CD8-positive, alpha-beta T cell (primary cell): ENCODE measurements at regions of chr10 and their contacts with region 1.

Region 1: GRCh38 chr10:33008499-33009243 is 50.6 kb upstream of the ITGB1 start:
- DNase-seq: peak in 8 of 9 experiments; percentile 44 to 82 (median 65)
- ATAC-seq: peak; percentile 59
- H3K4me3 ChIP-seq: peak overlapping the region; percentile 34 to 36
- H3K4me3 Mint-ChIP-seq: peak overlapping the region; percentile 68
- H3K27ac ChIP-seq: peak overlapping the region in 1 of 2 experiments; percentile 47
- H3K27ac Mint-ChIP-seq: peak overlapping the region; percentile 49
- H3K4me1 ChIP-seq: peaks cover 9% of the 10 kb centered on the region
- H3K4me1 Mint-ChIP-seq: peaks cover 35% of the 10 kb centered on the region
- H3K27me3 ChIP-seq: no peaks in the 10 kb centered on the region
- H3K27me3 Mint-ChIP-seq: peaks cover 12% of the 10 kb centered on the region
- CTCF ChIP-seq: peak; percentile 100

Region 2: GRCh38 chr10:32190890-32191491 is 817.7 kb before region 1 on chr10:
- CTCF ChIA-PET with region 1: interaction called, 12 read pairs
- POLR2A ChIA-PET with region 1: no interaction called
- intact Hi-C with region 1: loop called (anchors 1 to 2 kb)
- DNase-seq: peak in 2 of 9 experiments; percentile 52 to 65
- ATAC-seq: peak; percentile 51
- H3K4me3 ChIP-seq: no peak overlapping the region
- H3K4me3 Mint-ChIP-seq: no peak overlapping the region
- H3K27ac ChIP-seq: no peak overlapping the region
- H3K27ac Mint-ChIP-seq: no peak overlapping the region
- H3K4me1 ChIP-seq: no peaks in the 10 kb centered on the region
- H3K4me1 Mint-ChIP-seq: peaks cover 2% of the 10 kb centered on the region
- H3K27me3 ChIP-seq: no peaks in the 10 kb centered on the region
- H3K27me3 Mint-ChIP-seq: no peaks in the 10 kb centered on the region
- CTCF ChIP-seq: peak; percentile 92

Region 3: GRCh38 chr10:32367793-32368453 is 640.7 kb before region 1 on chr10:
- CTCF ChIA-PET with region 1: interaction called, 3 read pairs
- POLR2A ChIA-PET with region 1: no interaction called
- intact Hi-C with region 1: loop called (anchors 5 kb)
- DNase-seq: peak; percentile 49 to 87 (median 78)
- ATAC-seq: peak; percentile 73
- H3K4me3 ChIP-seq: no peak overlapping the region
- H3K4me3 Mint-ChIP-seq: peak overlapping the region; percentile 23
- H3K27ac ChIP-seq: no peak overlapping the region
- H3K27ac Mint-ChIP-seq: peak overlapping the region; percentile 78
- H3K4me1 ChIP-seq: peaks cover 38% of the 10 kb centered on the region
- H3K4me1 Mint-ChIP-seq: peaks cover 65% of the 10 kb centered on the region
- H3K27me3 ChIP-seq: no peaks in the 10 kb centered on the region
- H3K27me3 Mint-ChIP-seq: no peaks in the 10 kb centered on the region
- CTCF ChIP-seq: peak; percentile 86

Region 4: DNA sequence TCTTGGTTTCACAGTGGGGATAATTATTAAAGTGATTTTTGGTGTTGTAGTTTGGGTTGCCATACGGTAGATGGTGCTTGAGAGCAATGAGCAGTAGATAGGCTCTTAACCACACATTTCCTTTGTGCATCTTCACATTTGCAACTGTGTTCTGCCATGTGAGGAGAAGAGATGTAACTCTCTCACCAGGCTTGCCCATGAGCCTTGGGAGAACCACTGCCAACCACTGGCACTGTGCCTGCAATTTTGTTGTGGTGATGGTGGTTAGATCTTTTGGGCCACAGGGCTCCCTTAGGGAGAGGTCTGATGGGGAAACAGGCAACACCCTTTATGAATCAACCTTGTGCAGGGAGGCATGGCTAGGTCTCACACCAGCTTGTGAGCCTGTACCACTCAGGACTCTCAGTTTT is 358.4 kb before region 1 on chr10:
- CTCF ChIA-PET with region 1: interaction called, 4 read pairs
- POLR2A ChIA-PET with region 1: no interaction called
- intact Hi-C with region 1: loop called (anchors 10 kb)
- DNase-seq: peak in 2 of 9 experiments; percentile 35 to 50
- ATAC-seq: peak; percentile 38
- H3K4me3 ChIP-seq: no peak overlapping the region
- H3K4me3 Mint-ChIP-seq: no peak overlapping the region
- H3K27ac ChIP-seq: no peak overlapping the region
- H3K27ac Mint-ChIP-seq: peak overlapping the region; percentile 34
- H3K4me1 ChIP-seq: peaks cover 8% of the 10 kb centered on the region
- H3K4me1 Mint-ChIP-seq: peaks cover 11% of the 10 kb centered on the region
- H3K27me3 ChIP-seq: no peaks in the 10 kb centered on the region
- H3K27me3 Mint-ChIP-seq: no peaks in the 10 kb centered on the region
- CTCF ChIP-seq: peak; percentile 32

Region 5: DNA sequence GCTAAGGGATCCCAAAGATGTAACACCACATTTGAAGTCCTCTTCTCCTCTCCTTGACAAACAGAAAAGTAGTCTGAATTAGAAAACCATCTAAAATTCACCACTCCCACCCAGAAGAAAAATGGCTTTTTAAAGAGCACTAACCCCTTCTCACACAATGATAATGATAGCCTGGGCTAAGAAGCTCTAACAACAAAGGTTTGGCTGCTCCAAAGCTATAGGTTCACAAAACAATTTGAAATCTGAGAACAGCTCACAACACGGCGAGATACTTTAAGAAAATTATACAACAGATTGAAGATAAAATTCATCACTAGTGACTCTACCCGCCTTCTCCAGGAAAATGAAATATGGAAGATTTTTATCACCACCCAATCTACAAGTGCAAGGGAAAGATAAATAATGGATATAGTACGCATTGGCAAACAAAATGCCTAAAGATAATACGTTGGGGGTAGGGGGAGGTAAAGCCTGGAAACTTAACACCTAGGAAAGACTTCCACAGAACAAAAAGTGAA is 58.0 kb before region 1 on chr10:
- CTCF ChIA-PET with region 1: interaction called, 3 read pairs
- POLR2A ChIA-PET with region 1: no interaction called
- intact Hi-C with region 1: loop called in 1 of 2 experiments (anchors 2 kb)
- DNase-seq: no peak
- ATAC-seq: no peak
- H3K4me3 ChIP-seq: no peak overlapping the region
- H3K4me3 Mint-ChIP-seq: no peak overlapping the region
- H3K27ac ChIP-seq: peak overlapping the region in 1 of 2 experiments; percentile 49
- H3K27ac Mint-ChIP-seq: no peak overlapping the region
- H3K4me1 ChIP-seq: peaks cover 26% of the 10 kb centered on the region
- H3K4me1 Mint-ChIP-seq: peaks cover 84% of the 10 kb centered on the region
- H3K27me3 ChIP-seq: no peaks in the 10 kb centered on the region
- H3K27me3 Mint-ChIP-seq: no peaks in the 10 kb centered on the region
- CTCF ChIP-seq: no peak

Region 6: GRCh38 chr10:33022090-33022489 is 13.4 kb after region 1 on chr10:
- CTCF ChIA-PET with region 1: interaction called, 19 read pairs
- POLR2A ChIA-PET with region 1: interaction called, 4 read pairs
- intact Hi-C with region 1: no loop called
- DNase-seq: no peak
- ATAC-seq: no peak
- H3K4me3 ChIP-seq: no peak overlapping the region
- H3K4me3 Mint-ChIP-seq: no peak overlapping the region
- H3K27ac ChIP-seq: no peak overlapping the region
- H3K27ac Mint-ChIP-seq: no peak overlapping the region
- H3K4me1 ChIP-seq: no peaks in the 10 kb centered on the region
- H3K4me1 Mint-ChIP-seq: peaks cover 20% of the 10 kb centered on the region
- H3K27me3 ChIP-seq: no peaks in the 10 kb centered on the region
- H3K27me3 Mint-ChIP-seq: no peaks in the 10 kb centered on the region
- CTCF ChIP-seq: no peak

Region 7: GRCh38 chr10:33073641-33074415 is 65.2 kb after region 1 on chr10:
- CTCF ChIA-PET with region 1: no interaction called
- POLR2A ChIA-PET with region 1: no interaction called
- intact Hi-C with region 1: no loop called
- DNase-seq: peak in 2 of 9 experiments; percentile 18 to 19
- ATAC-seq: no peak
- H3K4me3 ChIP-seq: no peak overlapping the region
- H3K4me3 Mint-ChIP-seq: no peak overlapping the region
- H3K27ac ChIP-seq: no peak overlapping the region
- H3K27ac Mint-ChIP-seq: no peak overlapping the region
- H3K4me1 ChIP-seq: no peaks in the 10 kb centered on the region
- H3K4me1 Mint-ChIP-seq: peaks cover 1% of the 10 kb centered on the region
- H3K27me3 ChIP-seq: no peaks in the 10 kb centered on the region
- H3K27me3 Mint-ChIP-seq: no peaks in the 10 kb centered on the region
- CTCF ChIP-seq: no peak

Region 8: DNA sequence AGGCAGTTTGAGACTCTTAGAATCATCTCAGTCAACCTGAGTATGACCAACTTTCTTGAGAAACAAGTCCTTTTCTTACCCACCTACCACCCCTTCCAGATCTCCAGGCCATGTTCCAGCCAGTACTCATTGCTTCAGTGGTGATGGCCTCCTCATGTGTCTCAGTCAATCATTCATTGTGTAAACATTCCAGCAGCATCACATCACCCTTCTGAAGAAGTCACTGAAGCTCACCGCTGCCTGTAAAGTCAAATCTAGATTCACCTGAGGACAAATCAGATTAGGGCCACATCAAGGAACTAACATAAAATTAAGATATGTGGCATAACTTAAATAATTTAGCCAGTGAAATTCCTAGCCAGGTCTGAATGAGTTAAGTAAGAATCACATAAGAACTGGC is 793.1 kb after region 1 on chr10:
- CTCF ChIA-PET with region 1: no interaction called
- POLR2A ChIA-PET with region 1: no interaction called
- intact Hi-C with region 1: no loop called
- DNase-seq: no peak
- ATAC-seq: no peak
- H3K4me3 ChIP-seq: no peak overlapping the region
- H3K4me3 Mint-ChIP-seq: no peak overlapping the region
- H3K27ac ChIP-seq: no peak overlapping the region
- H3K27ac Mint-ChIP-seq: no peak overlapping the region
- H3K4me1 ChIP-seq: no peaks in the 10 kb centered on the region
- H3K4me1 Mint-ChIP-seq: no peaks in the 10 kb centered on the region
- H3K27me3 ChIP-seq: no peaks in the 10 kb centered on the region
- H3K27me3 Mint-ChIP-seq: no peaks in the 10 kb centered on the region
- CTCF ChIP-seq: no peak